ENCODE measurements at regions of chr1 and their contacts with region 1.

Region 1: GRCh38 chr1:100351095-100351891 is 1.0 kb upstream of the CDC14A start:
- DNase-seq: peak; percentile 88 to 95 (median 89)
- H3K4me3 ChIP-seq: peak overlapping the region; percentile 89 to 94
- H3K4me3 Mint-ChIP-seq: peak overlapping the region; percentile 90 to 100 (median 99)
- H3K27ac ChIP-seq: peak overlapping the region; percentile 85
- H3K27ac Mint-ChIP-seq: peak overlapping the region; percentile 95 to 100 (median 99)
- H3K4me1 ChIP-seq: peaks cover 26% of the 10 kb centered on the region
- H3K4me1 Mint-ChIP-seq: peaks cover 21 to 46% (median 25%) of the 10 kb centered on the region in 4 donors
- H3K27me3 ChIP-seq: no peaks in the 10 kb centered on the region
- H3K27me3 Mint-ChIP-seq: peaks cover 0 to 2% of the 10 kb centered on the region in 2 donors

Region 2: GRCh38 chr1:99808391-99809115 is 542.7 kb before region 1 on chr1:
- CTCF ChIA-PET with region 1: no interaction called
- POLR2A ChIA-PET with region 1: no interaction called
- intact Hi-C with region 1: loop called (anchors 2 kb)
- DNase-seq: peak; percentile 43 to 60 (median 57)
- H3K4me3 ChIP-seq: no peak overlapping the region
- H3K4me3 Mint-ChIP-seq: peak overlapping the region in 1 of 8 donors; percentile 4
- H3K27ac ChIP-seq: no peak overlapping the region
- H3K27ac Mint-ChIP-seq: peak overlapping the region in 1 of 7 donors; percentile 13
- H3K4me1 ChIP-seq: no peaks in the 10 kb centered on the region
- H3K4me1 Mint-ChIP-seq: peaks cover 0 to 6% (median 3%) of the 10 kb centered on the region in 4 donors
- H3K27me3 ChIP-seq: no peaks in the 10 kb centered on the region
- H3K27me3 Mint-ChIP-seq: peaks cover 10 to 13% of the 10 kb centered on the region in 2 donors

Region 3: DNA sequence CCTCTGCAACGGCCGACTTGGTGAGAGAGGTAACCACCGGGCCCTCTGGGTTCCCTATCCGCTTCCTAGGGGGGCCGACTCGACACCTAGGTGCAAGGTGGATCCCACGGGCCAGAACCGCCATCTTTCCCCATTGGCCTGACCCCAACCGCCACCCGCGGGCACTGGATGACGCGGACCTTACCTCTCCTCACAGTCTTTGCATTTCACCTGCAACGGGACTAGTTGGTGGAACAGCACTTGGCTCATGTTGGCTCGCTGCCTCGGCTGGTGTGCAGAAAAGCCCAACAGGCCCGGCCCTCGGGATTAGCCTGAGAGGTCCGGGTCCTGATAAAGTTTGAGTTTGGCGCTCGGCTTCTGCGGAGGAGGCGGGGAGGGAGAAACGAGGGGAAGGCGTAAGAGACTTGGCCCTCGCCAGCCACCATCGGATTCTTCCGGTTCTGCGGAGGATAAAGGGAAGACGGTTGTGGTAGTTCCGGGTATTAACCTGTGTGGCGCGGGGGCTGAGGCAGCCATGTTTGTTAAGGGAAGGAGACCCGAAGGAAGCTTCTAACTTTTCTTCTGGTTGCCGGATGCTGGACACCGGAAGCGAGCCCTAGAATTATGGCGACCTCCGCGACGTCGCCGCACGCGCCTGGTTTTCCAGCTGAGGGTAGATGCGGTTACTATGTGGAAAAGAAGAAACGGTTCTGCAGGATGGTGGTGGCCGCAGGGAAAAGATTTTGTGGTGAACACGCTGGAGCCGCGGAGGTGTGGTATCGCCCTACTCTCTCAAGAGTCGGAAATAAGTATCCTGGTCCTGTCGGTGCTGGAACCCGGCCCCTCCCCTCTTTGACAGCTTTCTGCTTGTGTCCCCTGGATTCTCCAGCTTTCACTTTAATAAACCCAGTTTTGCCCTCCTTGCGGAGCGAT is 218.5 kb before region 1 on chr1 and contains the starts of genes SASS6 and TRMT13:
- CTCF ChIA-PET with region 1: no interaction called
- POLR2A ChIA-PET with region 1: interaction called, 7 read pairs
- intact Hi-C with region 1: loop called (anchors 2 kb)
- DNase-seq: peak; percentile 93 to 97 (median 95)
- H3K4me3 ChIP-seq: peak within 1 kb of the TSS; percentile 84 to 99
- H3K4me3 Mint-ChIP-seq: peak within 1 kb of the TSS; percentile 96 to 99 (median 99)
- H3K27ac ChIP-seq: peak within 1 kb of the TSS; percentile 59
- H3K27ac Mint-ChIP-seq: peak within 1 kb of the TSS; percentile 94 to 99 (median 97)
- H3K4me1 ChIP-seq: peaks cover 29% of the 10 kb centered on the region
- H3K4me1 Mint-ChIP-seq: peaks cover 23 to 39% (median 32%) of the 10 kb centered on the region in 4 donors
- H3K27me3 ChIP-seq: no peaks in the 10 kb centered on the region
- H3K27me3 Mint-ChIP-seq: no peaks in the 10 kb centered on the region
- total RNA-seq, gene SASS6: 5.6 to 5.8 TPM
- total RNA-seq, gene TRMT13: 45.8 to 45.9 TPM

Region 4: GRCh38 chr1:100292711-100293110 is 58.6 kb before region 1 on chr1:
- CTCF ChIA-PET with region 1: interaction called, 4 read pairs
- POLR2A ChIA-PET with region 1: interaction called, 4 read pairs
- intact Hi-C with region 1: loop called (anchors 5 kb)
- DNase-seq: no peak
- H3K4me3 ChIP-seq: no peak overlapping the region
- H3K4me3 Mint-ChIP-seq: no peak overlapping the region
- H3K27ac ChIP-seq: no peak overlapping the region
- H3K27ac Mint-ChIP-seq: peak overlapping the region in 3 of 7 donors; percentile 57 to 75 (median 65)
- H3K4me1 ChIP-seq: no peaks in the 10 kb centered on the region
- H3K4me1 Mint-ChIP-seq: peaks cover 0 to 1% (median 0%) of the 10 kb centered on the region in 4 donors
- H3K27me3 ChIP-seq: no peaks in the 10 kb centered on the region
- H3K27me3 Mint-ChIP-seq: no peaks in the 10 kb centered on the region

Region 5: DNA sequence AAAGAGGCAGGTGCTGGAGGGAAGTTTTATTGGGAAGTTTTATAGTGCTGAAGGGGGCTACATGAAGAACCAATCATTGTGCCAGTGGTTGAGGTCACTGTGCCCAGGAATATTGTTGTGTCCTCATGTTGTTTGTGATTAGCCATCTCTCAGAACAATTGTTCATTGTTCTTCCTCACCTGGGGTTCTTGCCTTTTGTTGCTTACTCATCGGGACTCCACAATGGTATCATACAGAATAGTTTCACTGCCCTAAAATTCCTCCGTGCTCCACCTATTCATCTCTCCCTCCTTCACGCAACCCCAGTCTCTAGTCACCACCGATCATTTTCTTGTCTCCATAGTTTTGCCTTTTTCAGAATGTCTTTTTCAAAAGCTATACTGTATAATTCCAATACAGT is 37.9 kb before region 1 on chr1:
- CTCF ChIA-PET with region 1: no interaction called
- POLR2A ChIA-PET with region 1: no interaction called
- intact Hi-C with region 1: no loop called
- DNase-seq: no peak
- H3K4me3 ChIP-seq: no peak overlapping the region
- H3K4me3 Mint-ChIP-seq: no peak overlapping the region
- H3K27ac ChIP-seq: no peak overlapping the region
- H3K27ac Mint-ChIP-seq: peak overlapping the region in 1 of 7 donors; percentile 6
- H3K4me1 ChIP-seq: no peaks in the 10 kb centered on the region
- H3K4me1 Mint-ChIP-seq: no peaks in the 10 kb centered on the region
- H3K27me3 ChIP-seq: no peaks in the 10 kb centered on the region
- H3K27me3 Mint-ChIP-seq: no peaks in the 10 kb centered on the region

Region 6: GRCh38 chr1:100400404-100400803 is 49.1 kb after region 1 on chr1:
- CTCF ChIA-PET with region 1: interaction called, 28 read pairs
- POLR2A ChIA-PET with region 1: interaction called, 283 read pairs
- intact Hi-C with region 1: loop called (anchors 1 kb)
- DNase-seq: peak; percentile 78 to 90 (median 86)
- H3K4me3 ChIP-seq: peak overlapping the region in 1 of 2 donors; percentile 25
- H3K4me3 Mint-ChIP-seq: peak overlapping the region; percentile 74 to 85 (median 82)
- H3K27ac ChIP-seq: peak overlapping the region; percentile 55
- H3K27ac Mint-ChIP-seq: peak overlapping the region; percentile 89 to 95 (median 92)
- H3K4me1 ChIP-seq: peaks cover 100% of the 10 kb centered on the region
- H3K4me1 Mint-ChIP-seq: peaks cover 66 to 92% (median 80%) of the 10 kb centered on the region in 4 donors
- H3K27me3 ChIP-seq: no peaks in the 10 kb centered on the region
- H3K27me3 Mint-ChIP-seq: no peaks in the 10 kb centered on the region

Region 7: DNA sequence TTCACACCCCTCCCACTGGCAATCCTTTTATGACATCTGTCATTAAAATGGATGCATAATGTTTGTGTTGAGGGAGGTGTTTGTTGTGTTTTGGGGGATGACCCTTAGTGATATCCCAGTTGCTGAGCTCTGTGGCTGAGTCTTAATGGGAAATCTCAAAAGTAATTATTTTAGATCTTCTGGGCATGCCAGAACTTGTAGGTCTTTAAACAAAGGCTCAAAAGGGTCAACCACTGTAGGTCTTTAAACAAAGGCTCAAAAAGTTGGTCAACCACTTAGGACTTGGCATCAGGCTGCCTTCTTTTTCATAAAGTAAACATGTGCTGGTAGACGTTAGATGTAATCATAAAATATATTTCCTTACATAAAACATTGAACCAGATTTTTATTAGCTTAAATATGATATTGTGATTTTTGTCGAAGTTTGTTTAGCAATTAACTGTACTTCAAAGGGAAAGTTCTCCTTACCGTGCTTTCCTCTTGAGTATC is 79.1 kb after region 1 on chr1:
- CTCF ChIA-PET with region 1: interaction called, 9 read pairs
- POLR2A ChIA-PET with region 1: interaction called, 175 read pairs
- intact Hi-C with region 1: no loop called
- DNase-seq: no peak
- H3K4me3 ChIP-seq: no peak overlapping the region
- H3K4me3 Mint-ChIP-seq: peak overlapping the region in 3 of 8 donors; percentile 3 to 26 (median 13)
- H3K27ac ChIP-seq: no peak overlapping the region
- H3K27ac Mint-ChIP-seq: peak overlapping the region in 6 of 7 donors; percentile 35 to 76 (median 59)
- H3K4me1 ChIP-seq: peaks cover 78% of the 10 kb centered on the region
- H3K4me1 Mint-ChIP-seq: peaks cover 50 to 76% (median 64%) of the 10 kb centered on the region in 4 donors
- H3K27me3 ChIP-seq: no peaks in the 10 kb centered on the region
- H3K27me3 Mint-ChIP-seq: no peaks in the 10 kb centered on the region

Region 8: DNA sequence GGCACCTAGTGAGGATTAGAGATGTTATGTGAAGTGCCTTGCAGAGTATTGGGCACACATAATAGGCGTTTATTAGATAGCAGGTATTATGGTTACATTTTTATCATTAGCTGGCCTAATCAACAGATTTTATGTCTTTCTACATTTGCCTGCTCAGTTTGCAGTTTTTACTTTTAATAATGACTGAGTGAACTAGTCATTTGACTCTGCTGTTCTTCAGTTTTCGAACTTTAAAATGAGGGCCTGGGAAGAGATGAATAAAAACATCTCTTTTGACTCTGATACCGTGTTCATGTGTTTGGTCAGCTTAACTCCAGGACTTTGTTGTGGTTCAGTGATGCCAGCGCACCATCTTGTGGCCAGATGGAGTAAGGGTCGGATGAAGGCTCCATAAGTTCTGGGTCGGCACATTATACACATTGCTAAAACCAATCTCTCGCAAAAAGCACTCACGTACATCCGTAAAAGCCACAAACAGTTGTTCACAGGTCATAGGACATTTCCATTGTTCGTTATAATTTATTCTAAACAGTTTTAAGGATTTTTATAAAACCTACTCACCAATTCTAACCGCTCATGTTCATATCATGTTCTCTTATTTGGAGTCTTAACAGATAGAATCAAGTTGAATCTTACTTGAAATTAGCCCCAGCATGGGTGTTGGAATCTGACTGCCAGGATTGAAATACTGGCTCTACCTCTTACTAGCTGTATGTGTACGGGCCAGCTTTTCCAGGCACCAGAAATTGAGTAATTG is 108.2 kb after region 1 on chr1:
- CTCF ChIA-PET with region 1: interaction called, 57 read pairs
- POLR2A ChIA-PET with region 1: interaction called, 233 read pairs
- intact Hi-C with region 1: loop called (anchors 1 kb)
- DNase-seq: peak; percentile 57 to 70 (median 62)
- H3K4me3 ChIP-seq: no peak overlapping the region
- H3K4me3 Mint-ChIP-seq: peak overlapping the region in 7 of 8 donors; percentile 40 to 75 (median 63)
- H3K27ac ChIP-seq: peak overlapping the region; percentile 8
- H3K27ac Mint-ChIP-seq: peak overlapping the region; percentile 65 to 91 (median 90)
- H3K4me1 ChIP-seq: peaks cover 70% of the 10 kb centered on the region
- H3K4me1 Mint-ChIP-seq: peaks cover 44 to 86% (median 60%) of the 10 kb centered on the region in 4 donors
- H3K27me3 ChIP-seq: no peaks in the 10 kb centered on the region
- H3K27me3 Mint-ChIP-seq: no peaks in the 10 kb centered on the region

Region 9: GRCh38 chr1:100538913-100539835 is 187.9 kb after region 1 on chr1:
- CTCF ChIA-PET with region 1: no interaction called
- POLR2A ChIA-PET with region 1: no interaction called
- intact Hi-C with region 1: no loop called
- DNase-seq: peak in 4 of 5 donors; percentile 22 to 40 (median 34)
- H3K4me3 ChIP-seq: peak overlapping the region; percentile 12 to 61
- H3K4me3 Mint-ChIP-seq: peak overlapping the region; percentile 73 to 84 (median 78)
- H3K27ac ChIP-seq: no peak overlapping the region
- H3K27ac Mint-ChIP-seq: no peak overlapping the region
- H3K4me1 ChIP-seq: peaks cover 10% of the 10 kb centered on the region
- H3K4me1 Mint-ChIP-seq: peaks cover 5 to 12% (median 5%) of the 10 kb centered on the region in 4 donors
- H3K27me3 ChIP-seq: peaks cover 17% of the 10 kb centered on the region
- H3K27me3 Mint-ChIP-seq: peaks cover 27 to 34% of the 10 kb centered on the region in 2 donors